ENCODE measurements at regions of chr10 and their contacts with region 1.

Region 1: GRCh38 chr10:110871298-110872084 is at the start of gene PDCD4:
- DNase-seq: peak; percentile 98
- H3K4me3 Mint-ChIP-seq: peak within 1 kb of the TSS; percentile 78
- H3K27ac Mint-ChIP-seq: peak within 1 kb of the TSS; percentile 91
- H3K4me1 Mint-ChIP-seq: peaks cover 30% of the 10 kb centered on the region
- H3K27me3 Mint-ChIP-seq: no peaks in the 10 kb centered on the region
- CTCF ChIP-seq: no peak
- total RNA-seq, gene PDCD4: 80.7 and 133 TPM in 2 replicates

Region 2: GRCh38 chr10:110304780-110305421 is 566.6 kb before region 1 on chr10 and contains the start of gene SMNDC1:
- CTCF ChIA-PET with region 1: no interaction called
- POLR2A ChIA-PET with region 1: interaction called, 4 read pairs
- intact Hi-C with region 1: loop called (anchors 5 kb)
- DNase-seq: peak; percentile 98
- H3K4me3 Mint-ChIP-seq: peak within 1 kb of the TSS; percentile 94
- H3K27ac Mint-ChIP-seq: peak within 1 kb of the TSS; percentile 95
- H3K4me1 Mint-ChIP-seq: peaks cover 10% of the 10 kb centered on the region
- H3K27me3 Mint-ChIP-seq: no peaks in the 10 kb centered on the region
- CTCF ChIP-seq: no peak
- total RNA-seq, gene SMNDC1: 46.6 and 48.2 TPM in 2 replicates

Region 3: DNA sequence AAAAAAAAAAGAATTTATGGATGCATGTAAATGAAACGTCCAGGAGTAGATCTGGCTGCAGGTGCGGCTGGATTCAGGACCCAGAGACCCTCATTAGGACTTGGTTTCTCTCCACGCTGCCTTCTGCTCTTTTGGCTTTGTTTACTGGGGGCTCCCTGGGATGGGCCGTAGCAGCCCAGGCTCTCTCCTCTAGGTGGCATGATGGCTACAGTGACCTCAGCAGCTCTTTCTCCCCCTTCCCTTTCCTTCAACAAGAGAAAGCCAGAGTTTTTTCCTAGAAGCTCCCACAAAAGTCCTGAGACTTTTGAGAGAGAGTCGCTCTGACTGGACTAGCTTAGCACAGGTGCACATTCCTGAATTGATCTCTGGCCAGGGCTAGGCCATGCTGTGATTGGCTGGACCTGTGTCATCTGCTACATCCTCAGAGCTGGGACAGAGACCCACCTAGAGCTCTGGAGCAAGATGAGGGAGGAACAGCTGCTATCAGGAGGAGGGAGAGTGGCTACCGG is 67.6 kb before region 1 on chr10:
- CTCF ChIA-PET with region 1: interaction called, 4 read pairs
- POLR2A ChIA-PET with region 1: interaction called, 24 read pairs
- intact Hi-C with region 1: loop called (anchors 1 kb)
- DNase-seq: peak; percentile 61
- H3K4me3 Mint-ChIP-seq: no peak overlapping the region
- H3K27ac Mint-ChIP-seq: no peak overlapping the region
- H3K4me1 Mint-ChIP-seq: peaks cover 32% of the 10 kb centered on the region
- H3K27me3 Mint-ChIP-seq: no peaks in the 10 kb centered on the region
- CTCF ChIP-seq: peak; percentile 49

Region 4: DNA sequence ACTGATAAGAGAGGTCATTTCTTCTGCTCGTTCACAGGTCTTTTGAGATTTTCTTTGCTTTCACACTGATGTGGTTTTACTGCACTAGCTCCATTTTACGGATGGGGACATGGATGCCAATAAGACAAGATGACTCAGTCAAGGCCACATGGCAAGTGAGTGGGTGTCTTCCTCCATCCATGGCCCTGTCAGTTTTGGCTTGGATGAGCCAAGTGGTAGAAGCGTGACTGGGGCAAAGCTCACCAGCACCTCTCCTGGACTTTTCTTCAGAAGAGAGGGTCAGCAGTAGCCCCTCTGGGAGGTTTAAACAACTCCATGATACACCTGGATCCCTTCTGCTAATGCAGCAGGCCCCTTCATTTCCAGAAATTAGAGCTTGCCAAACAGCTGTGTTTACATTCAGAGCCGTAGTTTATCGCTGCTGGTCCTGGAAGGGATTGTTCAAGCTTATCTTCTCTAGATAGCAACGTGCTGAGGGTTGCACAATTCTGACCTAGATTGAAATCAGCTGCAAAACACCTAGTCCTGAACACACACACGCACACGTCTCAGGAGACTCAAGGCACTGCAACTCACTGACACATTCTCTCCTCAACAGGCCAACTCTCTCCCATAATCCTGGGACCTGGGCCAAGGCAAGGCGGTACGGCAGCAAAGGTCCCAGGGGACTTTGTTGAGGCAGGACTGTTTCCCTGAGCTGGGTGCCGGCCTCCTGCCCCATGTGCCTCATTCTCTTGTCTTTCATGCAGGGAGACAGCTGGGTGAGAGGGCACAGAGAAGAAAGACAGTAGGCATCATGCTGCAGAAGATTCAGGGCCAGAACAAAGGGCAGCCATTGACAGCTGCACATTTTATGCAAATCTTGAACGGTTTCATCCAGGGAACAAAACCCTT is 14.0 kb before region 1 on chr10:
- CTCF ChIA-PET with region 1: interaction called, 10 read pairs
- POLR2A ChIA-PET with region 1: interaction called, 97 read pairs
- intact Hi-C with region 1: no loop called
- DNase-seq: peak; percentile 52
- H3K4me3 Mint-ChIP-seq: no peak overlapping the region
- H3K27ac Mint-ChIP-seq: peak overlapping the region; percentile 39
- H3K4me1 Mint-ChIP-seq: peaks cover 48% of the 10 kb centered on the region
- H3K27me3 Mint-ChIP-seq: no peaks in the 10 kb centered on the region
- CTCF ChIP-seq: no peak

Region 5: GRCh38 chr10:110901954-110902819 is 30.7 kb after region 1 on chr10:
- CTCF ChIA-PET with region 1: no interaction called
- POLR2A ChIA-PET with region 1: interaction called, 12 read pairs
- intact Hi-C with region 1: no loop called
- DNase-seq: peak; percentile 93
- H3K4me3 Mint-ChIP-seq: peak overlapping the region; percentile 2
- H3K27ac Mint-ChIP-seq: peak overlapping the region; percentile 4
- H3K4me1 Mint-ChIP-seq: peaks cover 20% of the 10 kb centered on the region
- H3K27me3 Mint-ChIP-seq: no peaks in the 10 kb centered on the region
- CTCF ChIP-seq: no peak

Measured in MCF 10A (cell line).